Cardiac septum (tissue), 1 donor: ENCODE measurements at regions of chr3 and their contacts with region 1.

Region 1: GRCh38 chr3:149771652-149772271 is 19.5 kb upstream of the COMMD2 start:
- DNase-seq: no peak

Region 2: DNA sequence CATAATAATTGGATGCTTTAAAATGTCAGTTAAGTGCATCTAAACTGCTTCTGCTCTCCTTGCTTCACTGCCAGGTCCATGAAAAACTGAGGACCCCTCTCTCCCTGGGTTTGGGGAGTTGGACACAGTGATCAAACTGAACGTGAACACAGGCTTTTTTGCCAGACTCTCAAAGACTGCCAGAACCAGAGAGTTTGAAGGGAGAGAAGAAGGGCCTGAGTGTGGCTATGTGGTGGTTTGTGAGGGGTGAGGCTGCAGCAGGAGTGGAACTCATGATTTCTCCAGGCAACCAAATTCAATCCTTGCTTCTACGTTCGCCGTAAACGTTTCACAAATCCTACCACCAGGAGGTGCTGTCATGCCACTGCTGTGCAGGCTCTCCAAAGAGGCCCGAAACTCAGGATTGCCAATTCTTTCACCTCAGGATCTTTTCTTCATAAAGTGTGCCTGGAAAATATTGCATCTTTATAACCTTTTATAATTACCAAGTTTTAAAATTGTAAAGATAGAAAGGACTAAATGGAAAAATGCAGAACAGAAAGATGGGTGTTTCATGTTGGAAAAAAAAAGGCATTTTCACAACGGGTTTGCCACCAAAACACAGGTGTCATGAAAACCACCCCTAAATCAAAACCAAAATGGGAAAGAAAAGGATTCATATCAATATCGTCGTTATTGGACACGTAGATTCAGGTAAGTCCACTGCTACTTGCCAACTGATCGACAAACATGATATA is 277.6 kb before region 1 on chr3:
- intact Hi-C with region 1: loop called (anchors 5 kb)
- DNase-seq: no peak

Region 3: DNA sequence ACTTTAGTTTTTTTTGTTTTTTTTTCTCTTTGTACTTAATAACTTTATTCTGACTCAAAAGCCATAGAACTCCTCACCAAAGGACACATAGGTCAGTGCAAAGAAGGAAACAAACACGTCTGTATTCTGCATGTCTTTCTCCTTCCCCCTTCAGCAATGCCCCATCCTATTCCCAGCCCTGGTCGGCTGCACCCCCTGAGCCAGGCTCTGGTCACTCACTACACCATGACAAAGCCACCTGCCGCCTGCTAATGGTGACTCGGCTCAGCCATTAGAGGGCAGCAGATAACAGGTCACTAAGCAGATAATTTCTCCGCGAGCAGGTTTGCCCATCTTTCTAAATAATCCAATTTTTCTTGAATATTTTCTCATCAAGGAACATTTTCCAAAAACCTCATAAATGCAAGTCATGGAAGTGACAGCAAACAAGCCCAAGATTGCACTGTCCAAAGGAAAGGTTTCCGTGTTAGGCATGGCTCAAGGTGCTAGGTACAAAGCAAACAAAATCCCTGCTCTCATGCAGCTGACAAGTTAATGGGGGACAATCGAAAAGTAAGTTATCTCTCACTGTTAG is 259.5 kb before region 1 on chr3:
- intact Hi-C with region 1: loop called (anchors 5 kb)
- DNase-seq: no peak

Region 4: DNA sequence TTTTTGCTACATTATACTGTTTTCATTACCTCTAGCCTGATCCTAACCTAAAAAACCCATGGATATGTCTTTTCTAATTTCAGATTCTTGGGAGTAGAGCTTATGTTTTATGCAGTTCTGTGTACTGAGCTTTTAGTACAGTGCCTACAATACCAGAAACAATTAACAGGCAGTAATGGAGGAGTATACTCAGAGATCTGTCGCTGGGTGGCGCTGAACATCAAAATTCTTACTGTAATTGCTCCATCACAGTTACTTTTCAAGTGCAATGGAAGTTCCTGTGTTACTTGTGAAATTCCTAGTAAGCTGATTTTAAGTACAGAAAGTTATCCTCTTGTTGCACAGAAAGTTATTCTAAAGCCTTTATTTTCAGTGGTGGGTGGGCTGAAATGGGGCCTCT is 108.1 kb after region 1 on chr3:
- intact Hi-C with region 1: no loop called
- DNase-seq: no peak

Region 5: DNA sequence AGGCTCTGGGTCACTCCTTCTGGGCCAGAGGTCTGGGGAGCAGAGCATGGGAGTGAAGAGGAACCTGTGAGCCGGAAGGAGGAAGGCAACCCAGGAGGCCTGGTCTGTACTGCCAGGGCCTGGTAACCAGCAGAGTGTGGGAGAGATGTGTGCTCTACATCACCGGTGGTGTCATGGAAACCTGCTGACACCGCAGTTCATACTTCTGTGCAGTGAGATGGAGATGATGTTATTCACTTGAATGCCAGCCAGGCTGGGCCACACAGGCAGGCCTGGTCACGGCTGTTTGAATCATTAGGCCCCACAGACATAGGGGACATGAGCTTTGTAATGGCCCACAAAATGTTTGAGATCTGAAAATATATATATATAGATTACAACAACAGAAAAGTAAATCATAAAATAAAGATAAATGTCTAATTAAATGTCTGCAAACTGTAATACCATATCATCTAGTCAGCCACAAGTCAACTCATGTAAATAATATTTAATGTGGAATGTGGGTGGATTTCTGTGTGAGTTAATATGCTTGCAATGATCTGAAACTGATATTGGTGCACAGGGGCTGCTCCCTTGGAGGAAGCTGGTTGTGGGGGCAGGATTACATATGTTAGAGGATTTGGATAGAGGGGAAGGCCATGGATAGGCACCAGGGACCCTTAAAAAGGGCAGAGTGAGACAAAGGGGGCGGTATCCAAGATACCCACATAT is 307.4 kb after region 1 on chr3:
- intact Hi-C with region 1: no loop called
- DNase-seq: no peak